ENCODE measurements at regions of chr6 and their contacts with region 1.

Region 1: DNA sequence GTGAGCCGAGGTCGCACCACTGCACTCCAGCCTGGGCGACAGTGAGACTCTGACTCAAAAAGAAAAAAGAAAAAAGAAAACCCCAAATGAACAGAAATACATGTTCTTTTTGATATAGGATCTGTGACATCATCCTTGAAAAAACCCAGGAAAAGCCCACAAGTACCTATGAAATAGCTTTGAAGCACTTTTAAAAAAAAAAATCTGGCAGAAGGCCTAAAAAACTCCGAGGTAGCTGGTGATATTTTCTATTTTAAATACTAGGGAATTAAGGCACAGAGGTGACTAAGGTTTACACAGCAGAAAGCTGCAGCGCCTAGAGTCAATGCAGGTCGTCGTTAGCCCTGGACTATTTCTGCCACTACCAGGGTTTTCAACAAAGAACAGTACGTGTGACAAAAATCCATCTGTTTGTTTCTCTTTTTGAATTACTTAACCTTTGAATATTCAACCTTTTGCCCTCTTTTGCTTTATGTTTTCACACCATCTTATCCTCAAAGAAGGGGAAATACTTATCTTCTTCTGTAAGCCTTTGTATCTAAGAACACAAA is 39.4 kb upstream of the EEF1A1 start:
- DNase-seq: no peak
- CTCF ChIP-seq: no peak

Region 2: DNA sequence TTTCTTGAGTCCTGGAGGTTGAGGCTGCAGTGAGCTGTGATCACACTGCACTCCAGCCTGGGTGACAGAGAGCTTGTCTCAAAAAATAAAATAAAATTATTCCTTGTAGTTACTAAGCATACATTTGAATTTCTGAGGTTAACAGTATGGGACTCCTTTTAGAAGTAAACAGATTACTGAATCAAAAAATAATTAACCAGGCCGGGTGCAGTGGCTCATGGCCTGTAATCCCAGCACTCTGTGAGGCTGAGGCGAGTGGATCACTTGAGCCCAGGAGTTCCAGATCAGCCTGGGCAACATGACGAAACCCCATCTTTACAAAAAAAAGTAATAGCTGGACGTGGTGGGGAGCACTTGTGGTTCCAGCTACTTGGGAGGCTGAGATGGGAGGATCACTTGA is 17.4 kb before region 1 on chr6:
- CTCF ChIA-PET with region 1: interaction called, 16 read pairs
- POLR2A ChIA-PET with region 1: no interaction called
- DNase-seq: no peak
- CTCF ChIP-seq: no peak

Region 3: GRCh38 chr6:73548458-73549446 is 11.5 kb before region 1 on chr6:
- CTCF ChIA-PET with region 1: interaction called, 16 read pairs
- POLR2A ChIA-PET with region 1: no interaction called
- DNase-seq: no peak
- CTCF ChIP-seq: no peak

Region 4: GRCh38 chr6:73580247-73581149 is 20.2 kb after region 1 on chr6:
- CTCF ChIA-PET with region 1: interaction called, 11 read pairs
- POLR2A ChIA-PET with region 1: interaction called, 4 read pairs
- DNase-seq: peak; percentile 70
- CTCF ChIP-seq: peak; percentile 45

Region 5: GRCh38 chr6:73675466-73676098 is 115.3 kb after region 1 on chr6:
- CTCF ChIA-PET with region 1: no interaction called
- POLR2A ChIA-PET with region 1: no interaction called
- DNase-seq: peak; percentile 71
- CTCF ChIP-seq: peak; percentile 87

Measured in GM10248 (cell line).